IMR-90 (cell line): ENCODE measurements at regions of chr3 and their contacts with region 1.

Region 1: DNA sequence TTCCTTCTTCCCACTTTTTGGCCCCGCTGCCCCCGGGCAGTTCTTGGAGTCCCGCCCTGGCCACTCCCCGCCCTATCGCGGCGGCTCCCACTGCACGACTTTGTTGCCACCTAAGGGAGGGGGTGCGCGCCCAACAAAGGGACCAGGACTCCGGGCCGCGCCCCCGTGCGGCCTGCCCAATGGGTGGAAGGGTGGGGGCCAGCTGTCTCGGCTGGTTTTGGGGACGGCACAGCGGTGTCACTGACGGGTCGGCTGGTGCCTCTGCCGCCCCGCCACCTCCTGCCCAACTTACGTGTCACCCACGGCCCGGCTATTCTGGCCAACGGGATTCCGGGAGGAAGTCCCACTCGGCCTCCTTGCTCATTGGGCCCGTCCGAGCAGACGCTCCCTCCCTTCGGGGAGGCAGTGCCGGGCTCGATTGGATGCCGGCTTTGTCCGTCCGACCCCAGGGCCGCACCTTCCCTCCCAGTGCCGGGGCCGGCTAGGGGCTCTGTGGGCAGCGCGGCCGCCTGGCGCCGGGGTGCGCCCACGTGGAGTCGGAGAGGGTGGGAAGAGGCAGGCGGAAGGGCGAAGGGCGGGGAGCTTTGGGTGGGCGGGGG is at the start of gene GOLIM4:
- DNase-seq: peak; percentile 97
- ATAC-seq: peak; percentile 96
- H3K4me3 ChIP-seq: peak within 1 kb of the TSS; percentile 74
- H3K27ac ChIP-seq: peak within 1 kb of the TSS; percentile 90
- H3K4me1 ChIP-seq: peaks cover 7% of the 10 kb centered on the region
- H3K27me3 ChIP-seq: no peaks in the 10 kb centered on the region
- CTCF ChIP-seq: no peak
- POLR2A ChIP-seq: peak; percentile 56
- RAD21 ChIP-seq: no peak
- total RNA-seq, gene GOLIM4: 71.2 and 90.0 TPM in 2 replicates

Region 2: GRCh38 chr3:167941234-167941995 is 154.3 kb before region 1 on chr3:
- CTCF ChIA-PET with region 1: no interaction called
- POLR2A ChIA-PET with region 1: no interaction called
- dilution Hi-C with region 1: no loop called
- in situ Hi-C with region 1: no loop called
- intact Hi-C with region 1: loop called (anchors 5 kb)
- DNase-seq: peak; percentile 88
- ATAC-seq: peak; percentile 97
- H3K4me3 ChIP-seq: no peak overlapping the region
- H3K27ac ChIP-seq: no peak overlapping the region
- H3K4me1 ChIP-seq: peaks cover 5% of the 10 kb centered on the region
- H3K27me3 ChIP-seq: peaks cover 4% of the 10 kb centered on the region
- CTCF ChIP-seq: no peak
- POLR2A ChIP-seq: no peak
- RAD21 ChIP-seq: no peak

Region 3: GRCh38 chr3:168061332-168061996 is 34.2 kb before region 1 on chr3:
- CTCF ChIA-PET with region 1: interaction called, 5 read pairs
- POLR2A ChIA-PET with region 1: no interaction called
- dilution Hi-C with region 1: no loop called
- in situ Hi-C with region 1: no loop called
- intact Hi-C with region 1: loop called (anchors 5 kb)
- DNase-seq: no peak
- ATAC-seq: peak; percentile 76
- H3K4me3 ChIP-seq: no peak overlapping the region
- H3K27ac ChIP-seq: no peak overlapping the region
- H3K4me1 ChIP-seq: peaks cover 7% of the 10 kb centered on the region
- H3K27me3 ChIP-seq: no peaks in the 10 kb centered on the region
- CTCF ChIP-seq: peak; percentile 27; the same call in 1 of the 2 replicates
- POLR2A ChIP-seq: no peak
- RAD21 ChIP-seq: peak; percentile 26; the same call in 1 of the 2 replicates

Region 4: DNA sequence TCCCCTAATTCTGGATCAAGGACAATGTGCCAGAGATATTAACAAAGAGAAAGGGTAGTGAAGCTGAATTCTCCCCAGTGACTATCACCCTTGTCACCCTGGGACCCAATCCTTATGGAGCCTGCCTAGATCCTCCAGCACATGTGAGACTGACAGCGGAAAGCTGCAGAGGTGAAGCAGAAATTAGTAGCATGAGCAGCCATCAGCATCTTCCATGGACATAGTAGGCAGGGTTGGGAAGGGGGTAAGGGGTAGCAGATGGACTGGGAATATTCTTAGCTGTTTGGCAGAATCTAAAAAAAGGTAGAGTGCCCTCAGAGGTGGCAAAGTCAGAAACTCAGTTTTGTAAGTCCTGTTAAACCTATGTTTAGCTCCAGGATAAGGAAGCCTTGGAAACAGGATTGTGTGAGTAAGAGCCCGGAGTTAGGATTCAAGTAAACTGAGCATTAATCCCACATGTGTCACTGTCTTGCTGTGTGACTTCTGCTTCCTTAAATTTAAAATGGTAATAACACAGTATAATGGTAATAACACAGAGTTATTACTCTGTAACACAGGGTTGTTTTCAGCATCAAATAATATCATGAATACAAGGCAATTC is 14.4 kb before region 1 on chr3:
- CTCF ChIA-PET with region 1: interaction called, 4 read pairs
- POLR2A ChIA-PET with region 1: interaction called, 4 read pairs
- dilution Hi-C with region 1: no loop called
- in situ Hi-C with region 1: no loop called
- intact Hi-C with region 1: loop called (anchors 2 kb)
- DNase-seq: peak; percentile 74
- ATAC-seq: peak; percentile 86
- H3K4me3 ChIP-seq: no peak overlapping the region
- H3K27ac ChIP-seq: no peak overlapping the region
- H3K4me1 ChIP-seq: peaks cover 14% of the 10 kb centered on the region
- H3K27me3 ChIP-seq: no peaks in the 10 kb centered on the region
- CTCF ChIP-seq: no peak
- POLR2A ChIP-seq: no peak
- RAD21 ChIP-seq: no peak

Region 5: DNA sequence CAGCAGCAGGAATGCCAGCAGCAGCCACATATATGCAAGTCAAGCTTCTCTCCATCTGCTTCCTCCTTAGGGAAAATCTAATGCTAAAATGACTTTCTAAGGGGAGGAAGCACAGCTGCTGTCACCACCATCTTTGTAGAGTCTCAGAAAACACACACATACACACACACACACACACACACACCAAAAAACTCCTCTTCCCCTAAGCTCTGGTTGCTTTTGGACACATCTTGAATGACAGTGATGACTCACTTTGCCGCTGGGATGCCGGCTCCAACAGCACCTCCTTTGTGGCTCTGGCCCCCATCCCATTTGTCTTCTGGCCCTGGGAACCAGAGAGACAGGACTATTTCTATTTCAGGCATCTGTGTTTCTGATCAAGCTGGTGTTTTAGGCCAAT is 124.8 kb after region 1 on chr3:
- CTCF ChIA-PET with region 1: no interaction called
- POLR2A ChIA-PET with region 1: no interaction called
- dilution Hi-C with region 1: no loop called
- in situ Hi-C with region 1: no loop called
- intact Hi-C with region 1: no loop called
- DNase-seq: no peak
- ATAC-seq: no peak
- H3K4me3 ChIP-seq: no peak overlapping the region
- H3K27ac ChIP-seq: no peak overlapping the region
- H3K4me1 ChIP-seq: no peaks in the 10 kb centered on the region
- H3K27me3 ChIP-seq: no peaks in the 10 kb centered on the region
- CTCF ChIP-seq: no peak
- POLR2A ChIP-seq: no peak
- RAD21 ChIP-seq: no peak

Region 6: DNA sequence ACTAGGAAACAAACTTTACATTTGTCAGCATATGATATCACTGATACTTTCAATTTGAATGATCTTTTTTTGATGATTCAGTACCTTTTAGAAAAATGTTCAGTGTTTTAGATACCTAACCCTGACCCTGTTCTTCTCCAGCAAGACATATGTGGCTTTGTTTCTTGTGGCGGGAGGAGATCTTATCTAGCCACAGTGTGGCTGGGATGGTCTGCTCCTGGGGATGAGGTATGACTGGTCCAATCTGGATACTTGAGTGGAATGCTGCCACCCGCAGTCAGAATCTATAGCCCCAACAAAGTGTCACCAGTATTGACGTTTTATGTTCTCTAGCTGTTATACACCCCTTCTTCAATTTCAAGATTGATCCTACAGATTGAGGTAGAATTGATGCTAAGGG is 439.1 kb after region 1 on chr3:
- CTCF ChIA-PET with region 1: no interaction called
- POLR2A ChIA-PET with region 1: no interaction called
- dilution Hi-C with region 1: no loop called
- in situ Hi-C with region 1: no loop called
- intact Hi-C with region 1: no loop called
- DNase-seq: no peak
- ATAC-seq: no peak
- H3K4me3 ChIP-seq: no peak overlapping the region
- H3K27ac ChIP-seq: no peak overlapping the region
- H3K4me1 ChIP-seq: no peaks in the 10 kb centered on the region
- H3K27me3 ChIP-seq: no peaks in the 10 kb centered on the region
- CTCF ChIP-seq: no peak
- POLR2A ChIP-seq: no peak
- RAD21 ChIP-seq: no peak

Region 7: GRCh38 chr3:169112153-169112892 is 1016.6 kb after region 1 on chr3:
- CTCF ChIA-PET with region 1: no interaction called
- POLR2A ChIA-PET with region 1: no interaction called
- dilution Hi-C with region 1: no loop called
- in situ Hi-C with region 1: loop called (anchors 25 kb)
- intact Hi-C with region 1: no loop called
- DNase-seq: peak; percentile 93
- ATAC-seq: peak; percentile 91
- H3K4me3 ChIP-seq: no peak overlapping the region
- H3K27ac ChIP-seq: peak overlapping the region; percentile 52; the same call in 1 of the 2 replicates
- H3K4me1 ChIP-seq: peaks cover 10% of the 10 kb centered on the region; the same call in 1 of the 2 replicates
- H3K27me3 ChIP-seq: no peaks in the 10 kb centered on the region
- CTCF ChIP-seq: no peak
- POLR2A ChIP-seq: no peak
- RAD21 ChIP-seq: no peak